B cell (primary cell): ENCODE measurements at regions of chr21 and their contacts with region 1.

Region 1: GRCh38 chr21:33924079-33924765 is 8.6 kb upstream of the ATP5PO start:
- DNase-seq: peak; percentile 85
- ATAC-seq: peak; percentile 95
- H3K4me3 ChIP-seq: no peak overlapping the region
- H3K4me3 Mint-ChIP-seq: no peak overlapping the region
- H3K27ac ChIP-seq: no peak overlapping the region
- H3K27ac Mint-ChIP-seq: no peak overlapping the region
- H3K4me1 ChIP-seq: peaks cover 0 to 5% of the 10 kb centered on the region in 2 donors
- H3K4me1 Mint-ChIP-seq: peaks cover 3% of the 10 kb centered on the region
- H3K27me3 ChIP-seq: peaks cover 0 to 3% (median 0%) of the 10 kb centered on the region in 4 experiments
- H3K27me3 Mint-ChIP-seq: peaks cover 3% of the 10 kb centered on the region
- CTCF ChIP-seq: peak; percentile 92

Region 2: GRCh38 chr21:33947451-33948095 is 23.4 kb after region 1 on chr21:
- CTCF ChIA-PET with region 1: interaction called, 30 read pairs
- POLR2A ChIA-PET with region 1: interaction called, 3 read pairs
- intact Hi-C with region 1: no loop called
- DNase-seq: peak; percentile 48
- ATAC-seq: peak; percentile 67
- H3K4me3 ChIP-seq: no peak overlapping the region
- H3K4me3 Mint-ChIP-seq: peak overlapping the region; percentile 64
- H3K27ac ChIP-seq: peak overlapping the region; percentile 74 to 83
- H3K27ac Mint-ChIP-seq: peak overlapping the region; percentile 95
- H3K4me1 ChIP-seq: peaks cover 31 to 42% of the 10 kb centered on the region in 2 donors
- H3K4me1 Mint-ChIP-seq: peaks cover 50% of the 10 kb centered on the region
- H3K27me3 ChIP-seq: no peaks in the 10 kb centered on the region
- H3K27me3 Mint-ChIP-seq: no peaks in the 10 kb centered on the region
- CTCF ChIP-seq: no peak

Region 3: GRCh38 chr21:34020005-34020847 is 96.0 kb after region 1 on chr21:
- CTCF ChIA-PET with region 1: interaction called, 23 read pairs
- POLR2A ChIA-PET with region 1: no interaction called
- intact Hi-C with region 1: loop called (anchors 2 kb)
- DNase-seq: peak; percentile 73
- ATAC-seq: peak; percentile 62
- H3K4me3 ChIP-seq: peak overlapping the region in 2 of 5 experiments; percentile 15 to 16
- H3K4me3 Mint-ChIP-seq: peak overlapping the region; percentile 85
- H3K27ac ChIP-seq: peak overlapping the region; percentile 70 to 83
- H3K27ac Mint-ChIP-seq: peak overlapping the region; percentile 96
- H3K4me1 ChIP-seq: peaks cover 50 to 56% of the 10 kb centered on the region in 2 donors
- H3K4me1 Mint-ChIP-seq: peaks cover 50% of the 10 kb centered on the region
- H3K27me3 ChIP-seq: no peaks in the 10 kb centered on the region
- H3K27me3 Mint-ChIP-seq: no peaks in the 10 kb centered on the region
- CTCF ChIP-seq: peak; percentile 27

Region 4: DNA sequence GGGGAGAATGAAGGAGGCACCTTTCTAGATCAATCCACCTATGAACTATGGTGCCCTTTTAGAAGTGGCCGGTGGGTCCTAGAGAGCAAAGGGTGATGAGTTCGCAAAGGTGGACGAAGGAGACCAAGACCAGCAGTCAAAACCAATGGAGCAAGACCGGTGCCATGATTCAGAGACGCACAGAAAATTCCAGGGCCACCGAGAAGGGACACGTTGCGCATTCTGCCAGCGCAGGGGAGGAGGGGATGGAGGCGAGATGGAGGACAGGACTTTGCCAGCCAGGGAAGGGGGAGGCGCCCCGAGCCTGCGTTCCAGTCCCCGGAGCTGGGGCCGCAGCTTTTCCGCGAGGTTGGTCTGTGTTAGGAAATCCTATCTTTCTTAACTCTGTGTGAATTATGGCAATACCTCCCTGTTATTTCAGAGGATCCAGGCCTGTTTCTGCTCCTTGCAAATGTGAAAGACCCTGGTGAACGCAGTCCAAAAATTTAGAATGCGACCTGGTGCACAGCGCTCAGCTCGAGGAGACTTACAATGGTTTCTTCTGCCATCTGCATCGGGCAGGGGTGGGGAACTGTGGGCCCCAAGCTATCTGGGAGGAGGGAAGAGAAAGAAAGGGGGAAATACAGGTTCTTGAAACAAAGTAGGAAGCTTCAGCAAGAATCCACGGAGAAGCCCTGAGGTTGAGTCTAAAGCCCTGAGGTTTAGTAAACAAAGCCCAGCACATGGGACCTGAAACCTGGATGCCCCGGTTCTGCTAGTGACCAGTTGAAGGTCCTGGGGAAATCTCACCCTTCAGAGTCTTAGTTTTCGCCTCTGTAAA is 278.5 kb after region 1 on chr21:
- CTCF ChIA-PET with region 1: interaction called, 48 read pairs
- POLR2A ChIA-PET with region 1: no interaction called
- intact Hi-C with region 1: loop called (anchors 5 kb)
- DNase-seq: peak; percentile 5
- ATAC-seq: no peak
- H3K4me3 ChIP-seq: peak overlapping the region in 2 of 5 experiments; percentile 18 to 44
- H3K4me3 Mint-ChIP-seq: peak overlapping the region; percentile 78
- H3K27ac ChIP-seq: no peak overlapping the region
- H3K27ac Mint-ChIP-seq: no peak overlapping the region
- H3K4me1 ChIP-seq: peaks cover 20 to 21% of the 10 kb centered on the region in 2 donors
- H3K4me1 Mint-ChIP-seq: peaks cover 20% of the 10 kb centered on the region
- H3K27me3 ChIP-seq: peaks cover 0 to 22% (median 14%) of the 10 kb centered on the region in 4 experiments
- H3K27me3 Mint-ChIP-seq: peaks cover 16% of the 10 kb centered on the region
- CTCF ChIP-seq: no peak

Region 5: GRCh38 chr21:34362136-34362444 is 437.9 kb after region 1 on chr21:
- CTCF ChIA-PET with region 1: interaction called, 37 read pairs
- POLR2A ChIA-PET with region 1: no interaction called
- intact Hi-C with region 1: no loop called
- DNase-seq: no peak
- ATAC-seq: no peak
- H3K4me3 ChIP-seq: no peak overlapping the region
- H3K4me3 Mint-ChIP-seq: no peak overlapping the region
- H3K27ac ChIP-seq: no peak overlapping the region
- H3K27ac Mint-ChIP-seq: no peak overlapping the region
- H3K4me1 ChIP-seq: peaks cover 4% of the 10 kb centered on the region in 2 donors
- H3K4me1 Mint-ChIP-seq: peaks cover 6% of the 10 kb centered on the region
- H3K27me3 ChIP-seq: peaks cover 0 to 2% (median 0%) of the 10 kb centered on the region in 4 experiments
- H3K27me3 Mint-ChIP-seq: peaks cover 30% of the 10 kb centered on the region
- CTCF ChIP-seq: peak; percentile 43